Activated T-helper 2 cell treated with anti-CD3 and anti-CD28 coated beads, Interferon-gamma antibody, Interleukin-2, Interleukin-4, amounts not matched to agents 10 μg/mL and 5 μg/mL and 100 μg/mL, durations not matched to agents 14 hours and 24 hours and 36 hours (primary cell): ENCODE measurements at regions of chr3 and their contacts with region 1.

Region 1: DNA sequence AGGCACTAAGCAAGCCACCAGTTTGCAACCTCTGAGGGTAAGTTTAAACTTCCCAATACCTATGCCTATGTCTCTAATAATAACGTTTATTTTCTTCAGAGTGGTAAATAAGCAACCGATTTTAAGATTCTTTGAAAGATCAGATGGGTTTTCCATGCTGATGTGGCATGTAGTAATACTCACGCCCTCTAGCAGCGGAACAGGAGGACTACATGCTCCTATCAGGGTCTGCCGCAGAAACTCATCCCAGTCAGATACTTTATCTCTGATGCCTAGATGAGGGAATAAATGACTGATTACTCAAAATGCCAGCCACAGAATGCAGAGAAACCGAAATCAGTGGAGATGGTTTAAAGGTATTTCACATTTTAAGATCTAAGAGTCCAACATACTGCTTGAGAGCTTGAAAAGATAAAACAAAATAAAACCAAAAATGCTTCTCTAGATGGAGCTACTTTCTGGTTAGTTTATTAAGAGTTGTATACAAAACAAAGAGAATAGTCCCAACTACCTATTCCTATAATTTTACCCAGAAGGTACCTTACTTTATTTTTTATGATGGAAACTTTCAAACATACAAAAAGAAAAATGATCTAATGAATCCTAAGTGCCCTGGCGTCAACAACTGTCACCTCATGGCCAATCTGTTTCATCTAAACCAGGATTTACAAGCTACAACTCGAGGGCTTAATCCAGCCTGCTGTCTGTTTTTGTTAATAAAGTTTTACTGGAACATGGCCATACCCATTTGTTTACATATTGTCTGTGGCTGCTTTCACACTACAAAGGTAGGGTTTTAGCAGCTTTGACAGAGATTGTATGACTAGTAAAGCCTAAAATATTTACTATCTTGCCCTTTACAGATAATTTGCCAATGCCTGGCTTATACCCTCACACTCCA is 37.5 kb upstream of the STIMATE start:
- DNase-seq: peak; percentile 23
- H3K4me3 Mint-ChIP-seq: no peak overlapping the region
- H3K27ac Mint-ChIP-seq: peak overlapping the region; percentile 28
- H3K4me1 Mint-ChIP-seq: peaks cover 12% of the 10 kb centered on the region
- H3K27me3 Mint-ChIP-seq: no peaks in the 10 kb centered on the region

Region 2: GRCh38 chr3:52838561-52839267 is 96.2 kb before region 1 on chr3:
- intact Hi-C with region 1: no loop called
- DNase-seq: no peak
- H3K4me3 Mint-ChIP-seq: no peak overlapping the region
- H3K27ac Mint-ChIP-seq: no peak overlapping the region
- H3K4me1 Mint-ChIP-seq: peaks cover 18% of the 10 kb centered on the region
- H3K27me3 Mint-ChIP-seq: no peaks in the 10 kb centered on the region

Region 3: DNA sequence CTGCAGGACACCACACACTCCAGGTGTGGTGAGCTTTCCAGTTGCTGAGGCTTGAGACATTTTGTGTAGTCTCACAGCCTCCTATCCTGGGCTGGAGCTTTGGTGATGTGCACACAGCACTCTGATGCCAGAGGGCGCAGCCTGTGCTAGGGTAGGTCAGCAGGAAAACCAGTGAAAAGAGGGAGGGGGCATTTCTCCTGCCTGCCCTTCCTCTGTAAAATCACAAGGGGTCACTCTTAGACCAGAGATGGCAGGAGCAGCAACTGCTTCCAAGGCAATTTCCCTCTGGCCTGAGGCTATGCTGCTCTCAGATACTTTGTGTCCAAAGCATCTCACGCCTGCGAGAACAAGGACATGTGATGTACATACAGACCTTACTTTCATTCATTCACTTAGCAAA is 83.5 kb before region 1 on chr3:
- intact Hi-C with region 1: loop called (anchors 2 kb)
- DNase-seq: no peak
- H3K4me3 Mint-ChIP-seq: no peak overlapping the region
- H3K27ac Mint-ChIP-seq: no peak overlapping the region
- H3K4me1 Mint-ChIP-seq: no peaks in the 10 kb centered on the region
- H3K27me3 Mint-ChIP-seq: no peaks in the 10 kb centered on the region

Region 4: DNA sequence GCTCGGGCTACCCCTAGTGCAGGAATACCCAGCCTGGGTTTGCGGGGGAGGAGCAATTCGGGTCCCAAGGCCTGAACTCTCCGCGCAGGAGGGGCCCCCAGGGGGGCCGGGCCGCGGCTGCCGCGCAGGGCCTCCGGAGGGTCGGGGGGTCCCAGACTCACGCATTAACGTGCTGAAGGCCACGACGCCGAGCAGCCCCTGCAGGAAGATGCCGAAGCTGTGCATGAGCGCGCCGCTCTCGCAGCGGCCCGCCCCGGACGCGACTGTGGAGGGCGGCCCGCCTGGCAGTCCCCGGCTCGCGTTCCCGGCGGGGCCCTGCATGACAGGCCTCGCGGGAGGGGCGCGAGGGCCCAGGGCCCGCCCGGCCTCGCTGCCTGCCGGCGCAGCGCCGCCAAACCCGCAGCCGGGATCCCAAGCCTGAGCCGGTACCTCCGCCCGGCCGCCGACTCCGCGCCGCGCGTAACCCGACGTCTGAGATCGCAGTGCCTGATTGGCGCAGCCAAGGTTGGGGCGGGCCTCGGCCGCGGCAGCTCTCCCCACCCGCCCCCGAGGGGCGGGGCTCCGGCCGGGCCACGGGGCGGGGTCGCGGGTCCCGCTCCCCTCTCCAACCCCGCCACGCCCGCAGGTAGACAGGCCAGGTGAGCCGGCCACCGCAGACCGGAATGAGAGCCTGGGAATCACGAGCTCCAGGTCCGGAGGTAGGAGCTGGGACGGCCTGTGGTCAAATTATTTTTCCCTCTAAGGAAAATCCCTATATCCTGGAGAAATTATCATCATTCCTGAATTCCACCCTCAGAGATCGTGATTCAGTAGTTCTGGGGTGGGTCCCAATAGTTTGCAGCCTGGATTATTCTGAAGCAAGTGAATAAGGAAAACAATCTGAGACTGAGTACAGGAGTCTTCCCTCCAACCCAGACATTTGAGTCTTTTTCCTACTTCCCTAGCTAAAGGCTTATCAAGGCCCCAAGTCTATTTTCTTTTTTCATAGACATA is 37.5 kb before region 1 on chr3 and contains the start of gene STIMATE:
- intact Hi-C with region 1: loop called (anchors 5 kb)
- DNase-seq: peak; percentile 85
- H3K4me3 Mint-ChIP-seq: peak within 1 kb of the TSS; percentile 99
- H3K27ac Mint-ChIP-seq: peak within 1 kb of the TSS; percentile 72
- H3K4me1 Mint-ChIP-seq: peaks cover 40% of the 10 kb centered on the region
- H3K27me3 Mint-ChIP-seq: no peaks in the 10 kb centered on the region
- total RNA-seq, gene STIMATE: 17.4 and 17.6 TPM in 2 replicates

Region 5: DNA sequence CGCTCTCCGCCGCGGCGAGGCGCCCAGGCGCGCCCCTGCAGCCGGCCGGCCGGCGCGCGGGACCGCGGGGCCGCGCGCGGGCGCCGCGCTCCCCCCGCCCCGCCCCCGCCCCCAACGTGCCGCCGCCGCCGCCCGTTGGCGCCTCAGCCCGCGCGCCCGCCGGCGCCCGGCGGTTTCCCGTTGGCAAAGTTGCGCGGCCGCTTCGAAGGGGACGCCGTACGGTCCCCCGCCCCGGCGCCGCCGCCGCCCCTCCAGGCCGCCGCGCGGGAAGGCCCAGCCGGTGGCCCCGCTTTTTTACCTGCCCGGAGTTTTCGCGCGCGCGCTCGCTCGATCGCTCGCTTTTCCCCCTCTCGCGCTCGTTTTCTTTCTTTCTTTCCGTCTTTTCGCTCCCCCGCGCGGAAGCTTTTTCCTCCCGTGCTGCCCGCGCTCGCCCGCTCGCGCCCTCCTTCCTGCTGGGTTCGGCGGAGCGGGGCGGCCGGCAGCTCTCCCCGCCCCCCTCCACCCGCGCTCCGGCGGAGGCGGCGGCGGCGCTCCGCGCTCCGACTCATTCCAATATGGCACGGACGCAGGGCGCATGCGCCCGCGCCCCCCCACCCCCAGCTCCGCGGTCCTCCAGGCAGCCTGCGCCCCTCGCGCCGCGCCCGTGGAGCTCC is 110.8 kb after region 1 on chr3 and contains the start of gene SFMBT1:
- intact Hi-C with region 1: loop called (anchors 5 kb)
- DNase-seq: no peak
- H3K4me3 Mint-ChIP-seq: peak within 1 kb of the TSS; percentile 91
- H3K27ac Mint-ChIP-seq: peak within 1 kb of the TSS; percentile 91
- H3K4me1 Mint-ChIP-seq: peaks cover 35% of the 10 kb centered on the region
- H3K27me3 Mint-ChIP-seq: peaks cover 13% of the 10 kb centered on the region
- total RNA-seq, gene SFMBT1: 23.4 and 24.3 TPM in 2 replicates

Region 6: DNA sequence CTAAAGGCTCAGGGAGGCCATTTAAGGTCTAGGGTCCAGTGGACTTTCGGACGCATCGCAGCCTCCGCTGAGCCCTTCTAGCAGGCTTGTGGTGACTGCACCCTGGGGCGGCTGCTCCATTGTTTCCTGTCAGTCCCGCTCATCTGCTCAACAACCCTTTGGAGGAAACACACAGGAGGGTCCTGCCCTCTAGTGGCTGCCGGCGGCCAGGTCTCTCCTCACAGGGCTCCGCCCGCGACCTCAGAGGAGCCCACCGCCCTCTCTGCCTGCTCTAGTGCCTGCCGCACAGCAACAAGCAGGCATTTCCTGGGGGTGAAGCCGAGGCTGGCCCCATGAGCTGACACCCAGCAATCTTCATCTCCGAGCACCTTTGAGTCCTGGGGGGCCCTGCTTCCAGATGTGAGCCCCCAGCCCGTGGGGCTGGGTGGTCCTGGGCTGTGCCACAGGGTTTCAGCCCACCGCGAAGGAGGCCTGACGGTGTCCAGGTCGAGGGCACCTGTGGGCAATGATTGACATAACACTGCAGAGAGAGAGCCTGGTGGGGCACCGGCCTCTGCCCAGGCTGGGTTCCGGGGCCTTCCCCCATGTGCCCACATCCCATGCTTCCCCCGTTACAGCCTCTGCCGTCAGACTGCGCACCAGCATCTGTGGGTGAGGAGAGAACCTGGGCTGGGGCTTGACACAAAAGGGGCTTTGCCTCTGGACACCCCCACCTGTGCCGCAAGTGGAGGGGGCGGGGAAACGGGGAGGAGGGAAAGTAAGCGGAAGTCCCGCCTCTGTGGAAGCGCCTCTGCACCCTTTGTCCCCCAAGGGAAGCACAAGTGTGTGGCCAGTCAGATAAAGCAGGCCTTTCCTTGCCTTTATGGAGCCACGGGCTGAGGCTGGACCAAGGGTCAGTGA is 138.0 kb after region 1 on chr3:
- intact Hi-C with region 1: loop called (anchors 2 kb)
- DNase-seq: peak; percentile 85
- H3K4me3 Mint-ChIP-seq: peak overlapping the region; percentile 90
- H3K27ac Mint-ChIP-seq: peak overlapping the region; percentile 91
- H3K4me1 Mint-ChIP-seq: peaks cover 13% of the 10 kb centered on the region
- H3K27me3 Mint-ChIP-seq: no peaks in the 10 kb centered on the region